HepG2 (cell line): ENCODE measurements at regions of chr2 and their contacts with region 1.

Region 1: DNA sequence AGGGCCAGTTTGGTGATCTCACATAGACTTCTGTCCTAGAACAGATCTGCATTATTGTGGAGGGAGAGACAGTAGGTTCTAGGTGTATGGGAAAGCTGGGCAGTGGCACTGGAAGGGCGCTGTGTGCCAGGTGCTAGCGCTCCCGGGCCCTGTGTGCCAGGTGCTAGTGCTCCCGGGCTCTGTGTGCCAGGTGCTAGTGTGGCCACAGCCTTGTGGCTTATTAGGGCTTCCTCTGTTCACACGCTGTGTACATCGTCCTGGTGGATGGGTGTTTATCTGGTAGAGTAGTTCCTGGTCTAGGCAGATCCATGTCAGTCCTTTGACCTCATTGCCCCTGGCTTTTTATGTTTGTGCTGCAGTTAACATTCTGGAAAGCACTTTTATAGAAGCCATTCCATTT is 263.4 kb downstream of the AGAP1 start:
- DNase-seq: no peak
- ATAC-seq: peak; percentile 26; the same call in 1 of the 3 replicates
- H3K4me3 ChIP-seq: no peak overlapping the region
- H3K27ac ChIP-seq: no peak overlapping the region
- H3K4me1 ChIP-seq: 0 out of 2 replicates have a peak, but pooled peaks cover 6% of the 10 kb centered on the region
- H3K27me3 ChIP-seq: no peaks in the 10 kb centered on the region
- CTCF ChIP-seq: no peak
- EP300 ChIP-seq: no peak
- POLR2A ChIP-seq: no peak
- RAD21 ChIP-seq: no peak

Region 2: GRCh38 chr2:235643680-235644511 is 113.3 kb before region 1 on chr2:
- CTCF ChIA-PET with region 1: no interaction called
- POLR2A ChIA-PET with region 1: no interaction called
- in situ Hi-C with region 1: no loop called
- intact Hi-C with region 1: no loop called
- DNase-seq: no peak
- ATAC-seq: no peak
- H3K4me3 ChIP-seq: no peak overlapping the region
- H3K27ac ChIP-seq: no peak overlapping the region
- H3K4me1 ChIP-seq: peaks cover 31% of the 10 kb centered on the region
- H3K27me3 ChIP-seq: no peaks in the 10 kb centered on the region
- CTCF ChIP-seq: no peak
- EP300 ChIP-seq: no peak
- POLR2A ChIP-seq: no peak
- RAD21 ChIP-seq: no peak

Region 3: DNA sequence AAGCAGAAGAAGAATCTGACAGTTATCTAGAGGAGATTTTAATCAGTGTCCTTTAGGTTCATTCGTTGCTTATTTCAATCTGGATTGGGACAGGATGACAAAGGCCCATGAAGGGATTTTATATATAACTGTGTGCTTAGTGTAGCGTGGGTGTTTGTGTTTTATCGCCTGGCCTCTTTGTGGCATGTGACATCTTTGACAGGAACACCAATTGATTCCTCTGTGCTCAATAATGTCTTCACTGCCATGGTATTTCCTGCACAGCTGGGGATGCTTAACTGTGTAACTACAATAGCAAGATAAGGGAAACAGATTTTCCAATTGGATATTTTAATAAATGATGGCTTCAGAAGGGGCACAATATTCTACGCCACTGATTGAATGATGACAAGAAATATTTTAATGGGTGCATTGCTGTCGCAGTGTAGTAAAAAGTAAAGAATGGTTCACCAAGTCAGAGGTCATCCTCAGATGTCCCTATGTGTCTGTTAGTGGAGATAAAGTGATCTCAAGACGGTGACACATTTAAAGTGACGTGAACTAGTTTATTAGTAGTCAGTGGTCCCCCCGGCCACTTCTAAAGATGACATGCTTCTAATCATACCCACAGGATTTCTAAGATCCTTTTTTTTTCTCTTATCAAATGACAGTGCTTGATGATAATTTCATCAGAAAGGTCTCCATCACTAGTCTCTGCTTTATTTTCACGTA is 103.0 kb before region 1 on chr2:
- CTCF ChIA-PET with region 1: no interaction called
- POLR2A ChIA-PET with region 1: no interaction called
- in situ Hi-C with region 1: no loop called
- intact Hi-C with region 1: no loop called
- DNase-seq: no peak
- ATAC-seq: no peak
- H3K4me3 ChIP-seq: no peak overlapping the region
- H3K27ac ChIP-seq: no peak overlapping the region
- H3K4me1 ChIP-seq: peaks cover 18% of the 10 kb centered on the region
- H3K27me3 ChIP-seq: no peaks in the 10 kb centered on the region
- CTCF ChIP-seq: no peak
- EP300 ChIP-seq: no peak
- POLR2A ChIP-seq: no peak
- RAD21 ChIP-seq: no peak

Region 4: GRCh38 chr2:235789552-235789951 is 32.3 kb after region 1 on chr2:
- CTCF ChIA-PET with region 1: no interaction called
- POLR2A ChIA-PET with region 1: no interaction called
- in situ Hi-C with region 1: no loop called
- intact Hi-C with region 1: loop called (anchors 2 kb)
- DNase-seq: no peak
- ATAC-seq: no peak
- H3K4me3 ChIP-seq: no peak overlapping the region
- H3K27ac ChIP-seq: no peak overlapping the region
- H3K4me1 ChIP-seq: no peaks in the 10 kb centered on the region
- H3K27me3 ChIP-seq: no peaks in the 10 kb centered on the region
- CTCF ChIP-seq: no peak
- EP300 ChIP-seq: no peak
- POLR2A ChIP-seq: no peak
- RAD21 ChIP-seq: no peak